ENCODE measurements at regions of chr13 and their contacts with region 1.

Region 1: GRCh38 chr13:74133657-74134201 is 475 bp downstream of the KLF12 start:
- DNase-seq: peak; percentile 93
- ATAC-seq: peak; percentile 69

Region 2: GRCh38 chr13:73765651-73766384 is 367.9 kb before region 1 on chr13:
- intact Hi-C with region 1: loop called (anchors 5 kb)
- DNase-seq: peak; percentile 77
- ATAC-seq: peak; percentile 83

Region 3: DNA sequence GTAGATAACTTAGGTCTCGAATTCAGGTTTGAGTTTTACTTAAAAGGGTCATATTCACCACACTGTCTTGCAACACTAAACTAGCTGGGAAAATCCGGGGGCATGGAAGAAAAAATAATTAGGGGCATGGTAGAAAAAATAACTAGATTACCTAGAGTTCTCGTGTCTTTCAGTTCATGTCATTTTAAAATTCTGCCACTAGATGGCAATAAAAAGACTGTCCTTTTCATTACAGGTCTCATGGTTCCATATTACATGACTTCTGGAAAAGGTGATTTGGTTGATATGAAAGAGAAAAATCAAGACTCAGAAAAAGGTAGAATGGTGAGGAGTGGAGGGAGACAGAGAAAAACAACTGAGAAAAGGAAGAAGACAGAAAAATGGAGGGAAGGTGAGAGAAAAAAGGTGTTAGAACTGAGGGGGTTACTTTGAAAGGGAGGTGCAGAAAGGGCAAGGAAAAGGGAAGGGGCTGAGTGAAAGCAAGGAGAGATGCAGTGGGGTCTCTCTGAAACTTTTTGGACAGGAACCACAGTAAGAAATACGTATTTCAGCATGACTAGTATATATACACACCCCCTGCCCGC is 298.5 kb before region 1 on chr13:
- intact Hi-C with region 1: loop called (anchors 5 kb)
- DNase-seq: no peak
- ATAC-seq: no peak

Region 4: GRCh38 chr13:73945871-73946270 is 187.9 kb before region 1 on chr13:
- intact Hi-C with region 1: loop called (anchors 2 kb)
- DNase-seq: peak; percentile 67
- ATAC-seq: peak; percentile 83

Region 5: DNA sequence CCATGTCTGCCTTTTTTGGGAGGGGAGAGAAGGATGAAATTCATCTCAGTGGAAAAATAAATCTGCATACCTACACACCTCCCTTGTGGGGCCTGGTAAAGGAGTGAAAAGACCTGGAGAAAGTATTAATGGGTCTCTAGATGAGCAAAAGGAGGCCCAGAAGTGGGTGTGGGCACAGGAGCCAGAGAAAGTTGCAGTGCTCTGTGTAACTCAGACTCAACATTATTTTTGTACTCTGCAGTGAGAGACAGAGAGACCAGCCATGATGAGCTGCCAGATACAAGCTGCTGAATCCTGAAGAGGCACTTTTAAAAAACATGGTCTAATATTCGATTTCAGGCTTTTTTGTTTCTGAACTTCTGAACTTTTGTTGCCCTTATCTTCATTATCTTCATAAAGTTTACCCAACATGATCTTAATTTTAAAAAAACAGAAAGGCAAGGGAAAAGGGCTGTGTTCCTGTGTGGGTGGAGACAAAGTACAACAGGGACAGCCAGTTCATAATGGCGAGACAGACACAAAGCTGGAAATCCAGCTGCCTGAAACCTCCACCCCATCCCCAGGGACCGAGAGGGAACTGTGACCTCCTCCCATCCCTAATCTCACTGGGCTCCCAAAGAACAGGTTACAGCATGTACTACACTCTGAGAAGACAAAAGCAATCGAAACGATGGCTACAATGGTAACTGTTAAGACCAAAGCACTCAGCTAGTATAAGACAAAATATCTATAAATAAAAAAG is 76.8 kb before region 1 on chr13:
- intact Hi-C with region 1: loop called (anchors 2 kb)
- DNase-seq: peak; percentile 64
- ATAC-seq: peak; percentile 90

Region 6: GRCh38 chr13:74287724-74288169 is 154.0 kb after region 1 on chr13:
- intact Hi-C with region 1: loop called (anchors 5 kb)
- DNase-seq: peak; percentile 82
- ATAC-seq: peak; percentile 39